ENCODE measurements at regions of chr3 and their contacts with region 1.

Region 1: GRCh38 chr3:126982471-126983175 is at the start of gene PLXNA1:
- DNase-seq: peak; percentile 78 to 94 (median 90)
- ATAC-seq: peak; percentile 91
- H3K4me3 ChIP-seq: peak within 1 kb of the TSS; percentile 57
- H3K4me3 Mint-ChIP-seq: peak within 1 kb of the TSS; percentile 83 to 92 (median 88)
- H3K27ac ChIP-seq: peak within 1 kb of the TSS; percentile 91
- H3K27ac Mint-ChIP-seq: peak within 1 kb of the TSS; percentile 79 to 96 (median 90)
- H3K4me1 ChIP-seq: peaks cover 6 to 8% of the 10 kb centered on the region in 2 donors
- H3K4me1 Mint-ChIP-seq: peaks cover 0 to 28% (median 9%) of the 10 kb centered on the region in 7 donors
- H3K27me3 ChIP-seq: no peaks in the 10 kb centered on the region
- H3K27me3 Mint-ChIP-seq: peaks cover 5 to 19% (median 11%) of the 10 kb centered on the region in 5 donors
- total RNA-seq, gene PLXNA1: 7.8 to 16.8 (median 10.7) TPM

Region 2: GRCh38 chr3:125594581-125595011 is 1388.0 kb before region 1 on chr3:
- CTCF ChIA-PET with region 1: no interaction called
- POLR2A ChIA-PET with region 1: no interaction called
- intact Hi-C with region 1: loop called in 1 of 2 experiments (anchors 5 kb)
- DNase-seq: peak in 4 of 9 donors; percentile 10 to 25 (median 16)
- ATAC-seq: no peak
- H3K4me3 ChIP-seq: peak overlapping the region; percentile 82
- H3K4me3 Mint-ChIP-seq: peak overlapping the region; percentile 90 to 99 (median 94)
- H3K27ac ChIP-seq: peak overlapping the region; percentile 90
- H3K27ac Mint-ChIP-seq: peak overlapping the region; percentile 73 to 95 (median 89)
- H3K4me1 ChIP-seq: peaks cover 4 to 15% of the 10 kb centered on the region in 2 donors
- H3K4me1 Mint-ChIP-seq: peaks cover 32 to 50% (median 42%) of the 10 kb centered on the region in 7 donors
- H3K27me3 ChIP-seq: no peaks in the 10 kb centered on the region
- H3K27me3 Mint-ChIP-seq: no peaks in the 10 kb centered on the region

Region 3: GRCh38 chr3:126475413-126476114 is 507.1 kb before region 1 on chr3 and contains the start of gene ZXDC:
- CTCF ChIA-PET with region 1: no interaction called
- POLR2A ChIA-PET with region 1: no interaction called
- intact Hi-C with region 1: loop called (anchors 1 kb)
- DNase-seq: peak; percentile 85 to 95 (median 90)
- ATAC-seq: peak; percentile 89
- H3K4me3 ChIP-seq: peak within 1 kb of the TSS; percentile 89
- H3K4me3 Mint-ChIP-seq: peak within 1 kb of the TSS; percentile 81 to 97 (median 92)
- H3K27ac ChIP-seq: peak within 1 kb of the TSS; percentile 87
- H3K27ac Mint-ChIP-seq: peak within 1 kb of the TSS; percentile 82 to 96 (median 92)
- H3K4me1 ChIP-seq: peaks cover 29 to 34% of the 10 kb centered on the region in 2 donors
- H3K4me1 Mint-ChIP-seq: peaks cover 34 to 52% (median 48%) of the 10 kb centered on the region in 7 donors
- H3K27me3 ChIP-seq: no peaks in the 10 kb centered on the region
- H3K27me3 Mint-ChIP-seq: peaks cover 0 to 4% (median 0%) of the 10 kb centered on the region in 5 donors
- total RNA-seq, gene ZXDC: 33.7 to 71.9 (median 67.6) TPM

Region 4: GRCh38 chr3:126679318-126679751 is 303.3 kb before region 1 on chr3:
- CTCF ChIA-PET with region 1: no interaction called
- POLR2A ChIA-PET with region 1: no interaction called
- intact Hi-C with region 1: loop called (anchors 1 to 5 kb)
- DNase-seq: peak; percentile 46 to 82 (median 66)
- ATAC-seq: peak; percentile 89
- H3K4me3 ChIP-seq: no peak overlapping the region
- H3K4me3 Mint-ChIP-seq: peak overlapping the region in 9 of 10 donors; percentile 43 to 80 (median 72)
- H3K27ac ChIP-seq: no peak overlapping the region
- H3K27ac Mint-ChIP-seq: no peak overlapping the region
- H3K4me1 ChIP-seq: no peaks in the 10 kb centered on the region
- H3K4me1 Mint-ChIP-seq: peaks cover 0 to 5% (median 4%) of the 10 kb centered on the region in 7 donors
- H3K27me3 ChIP-seq: no peaks in the 10 kb centered on the region
- H3K27me3 Mint-ChIP-seq: peaks cover 4 to 12% (median 8%) of the 10 kb centered on the region in 5 donors

Region 5: DNA sequence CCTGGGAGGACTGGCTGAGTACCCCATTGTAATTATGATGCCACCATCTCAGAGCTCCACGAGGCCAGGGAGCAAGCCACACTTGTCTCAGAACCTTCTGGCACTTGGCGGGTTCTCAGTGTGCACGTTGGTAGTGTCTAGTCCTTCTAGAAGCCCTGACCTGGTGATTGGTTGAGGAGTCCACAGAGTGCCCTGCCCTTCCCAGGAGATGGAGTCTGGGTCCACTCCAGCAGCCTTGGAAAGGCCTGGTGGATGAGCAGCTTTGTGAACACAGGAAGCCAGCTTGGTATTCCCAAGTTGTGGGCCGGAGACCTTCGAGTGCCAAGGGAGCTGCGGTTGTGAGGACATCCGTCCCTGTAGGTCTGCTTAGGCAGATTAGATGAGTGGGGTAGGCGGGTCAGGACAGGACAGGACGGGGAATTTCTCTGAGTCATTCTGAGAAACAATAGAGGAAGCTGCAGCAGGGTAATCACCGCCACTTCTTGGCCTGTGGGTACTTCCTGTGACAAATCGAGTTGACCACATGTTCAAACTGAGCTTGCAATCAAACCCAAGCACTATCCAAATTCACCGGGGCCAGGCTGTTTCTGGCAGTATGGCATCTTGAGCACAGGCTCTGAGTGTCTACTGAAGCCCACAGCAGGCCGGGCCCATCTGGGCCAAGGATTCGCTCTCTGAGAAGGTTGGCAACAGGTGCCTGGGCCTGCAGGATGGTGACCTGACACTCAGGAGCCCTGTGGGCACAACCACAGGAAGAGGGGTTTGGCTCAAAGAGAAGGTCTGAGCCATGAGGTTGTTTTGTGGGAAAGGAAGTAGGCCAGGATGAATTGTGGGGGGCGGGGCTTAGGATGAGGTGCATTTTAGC is 71.2 kb before region 1 on chr3:
- CTCF ChIA-PET with region 1: no interaction called
- POLR2A ChIA-PET with region 1: no interaction called
- intact Hi-C with region 1: loop called in 1 of 2 experiments (anchors 1 kb)
- DNase-seq: peak in 4 of 9 donors; percentile 2 to 61 (median 12)
- ATAC-seq: peak; percentile 93
- H3K4me3 ChIP-seq: peak overlapping the region; percentile 16
- H3K4me3 Mint-ChIP-seq: peak overlapping the region in 6 of 10 donors; percentile 11 to 84 (median 28)
- H3K27ac ChIP-seq: no peak overlapping the region
- H3K27ac Mint-ChIP-seq: peak overlapping the region; percentile 42 to 94 (median 69)
- H3K4me1 ChIP-seq: peaks cover 15 to 22% of the 10 kb centered on the region in 2 donors
- H3K4me1 Mint-ChIP-seq: peaks cover 23 to 58% (median 36%) of the 10 kb centered on the region in 7 donors
- H3K27me3 ChIP-seq: no peaks in the 10 kb centered on the region
- H3K27me3 Mint-ChIP-seq: peaks cover 0 to 5% (median 0%) of the 10 kb centered on the region in 5 donors

Region 6: GRCh38 chr3:127590593-127591477 is 608.2 kb after region 1 on chr3 and contains the start of gene TPRA1:
- CTCF ChIA-PET with region 1: no interaction called
- POLR2A ChIA-PET with region 1: no interaction called
- intact Hi-C with region 1: loop called (anchors 1 to 2 kb)
- DNase-seq: peak; percentile 58 to 90 (median 85)
- ATAC-seq: peak; percentile 90
- H3K4me3 ChIP-seq: peak within 1 kb of the TSS; percentile 91
- H3K4me3 Mint-ChIP-seq: peak within 1 kb of the TSS; percentile 86 to 99 (median 96)
- H3K27ac ChIP-seq: peak within 1 kb of the TSS; percentile 80
- H3K27ac Mint-ChIP-seq: peak within 1 kb of the TSS; percentile 86 to 96 (median 94)
- H3K4me1 ChIP-seq: peaks cover 11 to 12% of the 10 kb centered on the region in 2 donors
- H3K4me1 Mint-ChIP-seq: peaks cover 14 to 51% (median 43%) of the 10 kb centered on the region in 7 donors
- H3K27me3 ChIP-seq: no peaks in the 10 kb centered on the region
- H3K27me3 Mint-ChIP-seq: no peaks in the 10 kb centered on the region
- total RNA-seq, gene TPRA1: 13.6 to 30.6 (median 24.5) TPM

Region 7: GRCh38 chr3:128123538-128124368 is 1141.1 kb after region 1 on chr3 and contains the start of gene RUVBL1:
- CTCF ChIA-PET with region 1: no interaction called
- POLR2A ChIA-PET with region 1: no interaction called
- intact Hi-C with region 1: loop called in 1 of 2 experiments (anchors 2 kb)
- DNase-seq: peak; percentile 85 to 99 (median 98)
- ATAC-seq: peak; percentile 97
- H3K4me3 ChIP-seq: peak within 1 kb of the TSS; percentile 83
- H3K4me3 Mint-ChIP-seq: peak within 1 kb of the TSS; percentile 82 to 100 (median 98)
- H3K27ac ChIP-seq: peak within 1 kb of the TSS; percentile 84
- H3K27ac Mint-ChIP-seq: peak within 1 kb of the TSS; percentile 95 to 99 (median 97)
- H3K4me1 ChIP-seq: peaks cover 13 to 15% of the 10 kb centered on the region in 2 donors
- H3K4me1 Mint-ChIP-seq: peaks cover 23 to 40% (median 27%) of the 10 kb centered on the region in 7 donors
- H3K27me3 ChIP-seq: no peaks in the 10 kb centered on the region
- H3K27me3 Mint-ChIP-seq: peaks cover 0 to under 1% (median 0%) of the 10 kb centered on the region in 5 donors
- total RNA-seq, gene RUVBL1: 16.8 to 59.3 (median 22.5) TPM

Measured in naive thymus-derived CD4-positive, alpha-beta T cell (primary cell).